ENCODE measurements at regions of chr2 and their contacts with region 1.

Region 1: GRCh38 chr2:239882331-239882732 is 142.8 kb downstream of the NDUFA10 start:
- DNase-seq: peak; percentile 31
- H3K4me3 ChIP-seq: no peak overlapping the region
- H3K27ac ChIP-seq: no peak overlapping the region
- H3K4me1 ChIP-seq: no peaks in the 10 kb centered on the region
- H3K27me3 ChIP-seq: no peaks in the 10 kb centered on the region
- CTCF ChIP-seq: peak; percentile 36 to 62

Region 2: DNA sequence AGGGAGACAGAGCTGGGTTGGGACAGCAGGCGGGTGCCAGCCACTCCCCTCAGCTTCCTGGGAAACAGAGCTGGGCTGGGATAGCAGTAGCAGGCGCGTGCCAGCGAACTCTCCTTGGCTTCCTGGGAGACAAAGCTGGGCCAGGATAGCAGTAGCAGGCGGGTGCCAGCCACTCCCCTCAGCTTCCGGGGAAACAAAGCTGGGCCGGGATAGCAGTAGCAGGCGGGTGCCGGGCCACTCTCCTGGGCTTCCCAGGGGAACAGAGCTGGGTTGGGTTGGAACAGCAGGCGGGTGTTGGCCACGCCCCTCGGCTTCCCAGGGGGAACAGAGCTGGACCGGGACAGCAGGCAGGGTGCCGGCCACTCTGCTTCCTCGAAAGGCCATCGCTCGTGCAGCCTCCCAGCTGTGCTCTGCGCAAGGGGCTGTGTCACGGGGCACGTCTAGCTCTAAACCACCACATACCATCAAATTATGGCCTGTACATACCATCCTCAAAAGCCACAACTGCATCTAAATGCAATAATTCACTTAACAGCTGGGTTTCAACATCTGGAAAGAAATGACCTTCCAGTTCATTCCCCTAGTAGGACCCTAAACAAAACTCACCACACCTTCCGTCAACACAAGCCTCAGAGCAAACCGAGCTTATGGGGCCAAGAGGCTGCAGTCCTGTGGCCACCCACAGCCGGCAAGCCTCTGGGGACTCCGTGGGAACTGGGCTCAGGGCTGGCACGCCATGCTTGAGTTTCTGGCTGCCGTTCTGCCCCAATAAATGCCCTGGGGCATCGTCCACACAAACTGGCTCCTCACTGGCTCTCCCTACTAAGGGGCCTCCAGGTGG is 806.2 kb before region 1 on chr2:
- CTCF ChIA-PET with region 1: no interaction called
- dilution Hi-C with region 1: no loop called
- in situ Hi-C with region 1: no loop called
- intact Hi-C with region 1: loop called (anchors 10 kb)
- DNase-seq: no peak
- H3K4me3 ChIP-seq: no peak overlapping the region
- H3K27ac ChIP-seq: no peak overlapping the region
- H3K4me1 ChIP-seq: no peaks in the 10 kb centered on the region
- H3K27me3 ChIP-seq: no peaks in the 10 kb centered on the region
- CTCF ChIP-seq: no peak

Region 3: DNA sequence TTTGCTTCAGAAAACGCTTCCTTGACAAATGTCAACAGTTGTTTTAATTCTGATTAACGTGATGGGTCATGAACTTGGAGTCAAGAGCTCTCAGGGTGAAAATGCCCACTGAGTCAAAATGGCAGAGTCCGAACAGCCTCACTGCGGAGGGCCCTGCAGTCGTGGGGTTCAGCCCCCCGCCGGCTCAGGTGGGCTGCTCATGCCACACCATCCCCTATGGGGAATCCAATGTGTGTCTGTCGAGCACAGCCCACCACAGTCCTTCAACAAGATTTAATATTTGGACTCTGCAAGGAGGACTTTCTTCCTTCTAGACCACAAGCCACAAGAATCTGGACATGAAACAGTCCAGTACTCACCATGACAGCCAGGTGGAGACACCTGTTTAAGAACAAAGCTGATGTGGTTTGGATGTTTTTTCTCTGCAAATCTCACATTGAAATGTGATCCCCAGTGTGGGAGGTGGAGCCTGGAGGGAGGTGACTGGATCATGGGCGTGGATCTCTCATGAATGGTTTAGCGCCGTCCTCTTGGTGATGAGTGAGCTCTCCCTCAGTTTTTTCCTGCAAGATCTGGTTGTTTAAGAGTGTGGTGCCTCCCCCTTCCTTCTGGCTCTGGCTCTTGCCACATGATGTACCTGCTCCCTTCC is 58.2 kb before region 1 on chr2:
- CTCF ChIA-PET with region 1: no interaction called
- dilution Hi-C with region 1: no loop called
- in situ Hi-C with region 1: no loop called
- intact Hi-C with region 1: loop called (anchors 2 kb)
- DNase-seq: peak; percentile 66
- H3K4me3 ChIP-seq: no peak overlapping the region
- H3K27ac ChIP-seq: no peak overlapping the region
- H3K4me1 ChIP-seq: no peaks in the 10 kb centered on the region
- H3K27me3 ChIP-seq: no peaks in the 10 kb centered on the region
- CTCF ChIP-seq: peak in 1 of 2 donors; percentile 23

Region 4: GRCh38 chr2:239846789-239847676 is 35.3 kb before region 1 on chr2:
- CTCF ChIA-PET with region 1: no interaction called
- dilution Hi-C with region 1: no loop called
- in situ Hi-C with region 1: no loop called
- intact Hi-C with region 1: no loop called
- DNase-seq: no peak
- H3K4me3 ChIP-seq: no peak overlapping the region
- H3K27ac ChIP-seq: no peak overlapping the region
- H3K4me1 ChIP-seq: no peaks in the 10 kb centered on the region
- H3K27me3 ChIP-seq: no peaks in the 10 kb centered on the region
- CTCF ChIP-seq: no peak

Region 5: DNA sequence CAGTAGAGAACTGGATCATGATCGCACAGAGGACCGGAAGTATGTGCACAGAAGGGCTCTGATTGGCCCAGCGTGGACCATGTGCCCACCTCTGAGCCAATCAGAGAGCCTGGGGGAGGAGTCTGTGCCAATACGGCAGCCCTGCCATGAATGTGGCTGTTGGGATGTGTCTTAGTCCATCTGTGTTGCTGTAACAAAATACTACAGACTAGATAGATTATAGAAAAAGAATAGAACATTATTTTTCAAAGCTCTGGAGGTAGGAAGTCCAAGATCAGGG is 10.8 kb after region 1 on chr2:
- CTCF ChIA-PET with region 1: no interaction called
- dilution Hi-C with region 1: no loop called
- in situ Hi-C with region 1: no loop called
- intact Hi-C with region 1: no loop called
- DNase-seq: no peak
- H3K4me3 ChIP-seq: no peak overlapping the region
- H3K27ac ChIP-seq: no peak overlapping the region
- H3K4me1 ChIP-seq: no peaks in the 10 kb centered on the region
- H3K27me3 ChIP-seq: no peaks in the 10 kb centered on the region
- CTCF ChIP-seq: no peak

Region 6: DNA sequence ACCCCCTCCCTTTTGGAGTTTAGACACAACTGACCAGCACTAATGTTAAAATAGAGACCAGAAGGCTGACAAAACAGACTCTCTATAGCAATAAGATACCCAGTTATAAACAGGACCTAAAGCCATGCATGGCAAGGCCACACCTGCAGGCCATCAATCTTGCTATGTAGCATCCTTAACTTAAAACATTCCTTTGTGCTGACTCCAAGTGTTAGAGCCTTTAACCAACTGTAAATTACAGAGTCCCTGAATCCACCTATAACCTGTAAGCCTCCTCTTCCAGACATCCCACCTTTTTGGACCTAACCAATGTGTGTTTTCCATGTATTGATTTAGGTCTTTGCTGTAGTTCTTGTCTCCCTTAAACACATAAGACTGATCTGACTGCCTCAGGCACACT is 657.6 kb after region 1 on chr2:
- CTCF ChIA-PET with region 1: no interaction called
- dilution Hi-C with region 1: no loop called
- in situ Hi-C with region 1: no loop called
- intact Hi-C with region 1: no loop called
- DNase-seq: no peak
- H3K4me3 ChIP-seq: no peak overlapping the region
- H3K27ac ChIP-seq: no peak overlapping the region
- H3K4me1 ChIP-seq: no peaks in the 10 kb centered on the region
- H3K27me3 ChIP-seq: no peaks in the 10 kb centered on the region
- CTCF ChIP-seq: no peak